ENCODE measurements at regions of chr2 and their contacts with region 1.

Region 1: DNA sequence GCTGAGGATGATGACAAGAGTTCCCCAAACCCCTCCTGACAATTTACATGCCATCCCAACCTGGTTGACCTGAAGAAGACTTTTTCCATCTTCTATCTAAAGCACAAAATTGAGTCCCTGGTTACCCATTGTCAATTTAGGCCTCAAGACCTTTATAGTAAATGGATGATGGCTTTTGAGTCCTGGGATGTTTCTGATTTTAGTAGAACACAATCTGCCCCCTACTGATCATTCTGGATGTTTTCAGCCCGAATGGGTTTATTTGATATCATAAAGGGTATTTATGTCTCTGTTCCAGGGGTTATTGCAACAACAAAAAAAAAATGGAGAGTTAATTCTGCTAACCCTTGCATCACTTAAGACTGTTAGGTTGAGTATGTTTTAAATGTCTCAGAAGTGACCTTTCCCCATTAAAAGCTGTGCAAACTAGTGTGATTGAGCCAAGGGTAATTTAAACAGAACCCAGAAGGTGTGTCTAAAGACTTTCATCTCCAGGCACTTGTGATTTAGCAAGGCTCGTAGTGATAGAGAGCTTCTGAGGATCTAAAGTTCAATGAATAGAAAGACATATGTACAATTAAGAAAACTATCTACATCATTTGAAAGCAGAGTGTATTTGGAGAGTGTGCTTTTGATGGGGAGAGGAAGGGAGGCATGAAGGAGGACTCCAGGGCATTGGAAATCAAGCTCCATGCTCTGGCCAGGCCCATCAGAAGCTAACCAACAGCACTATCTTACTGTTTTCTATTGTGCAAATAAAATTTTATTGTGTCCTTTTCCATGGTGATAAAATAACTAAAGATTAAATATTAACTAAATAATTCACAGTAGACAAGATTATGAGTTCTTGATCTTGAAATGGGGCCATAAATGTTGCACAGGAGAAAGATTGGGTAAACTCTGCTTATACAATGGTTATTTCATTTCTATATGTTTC is 96.6 kb upstream of the NOSTRIN start:
- DNase-seq: no peak
- H3K4me3 ChIP-seq: no peak overlapping the region
- H3K27ac ChIP-seq: no peak overlapping the region
- H3K27me3 ChIP-seq: no peaks in the 10 kb centered on the region
- CTCF ChIP-seq: peak; percentile 58

Region 2: GRCh38 chr2:168470320-168471162 is 235.3 kb before region 1 on chr2:
- CTCF ChIA-PET with region 1: no interaction called
- POLR2A ChIA-PET with region 1: no interaction called
- DNase-seq: no peak
- H3K4me3 ChIP-seq: no peak overlapping the region
- H3K27ac ChIP-seq: no peak overlapping the region
- H3K27me3 ChIP-seq: no peaks in the 10 kb centered on the region
- CTCF ChIP-seq: no peak

Region 3: DNA sequence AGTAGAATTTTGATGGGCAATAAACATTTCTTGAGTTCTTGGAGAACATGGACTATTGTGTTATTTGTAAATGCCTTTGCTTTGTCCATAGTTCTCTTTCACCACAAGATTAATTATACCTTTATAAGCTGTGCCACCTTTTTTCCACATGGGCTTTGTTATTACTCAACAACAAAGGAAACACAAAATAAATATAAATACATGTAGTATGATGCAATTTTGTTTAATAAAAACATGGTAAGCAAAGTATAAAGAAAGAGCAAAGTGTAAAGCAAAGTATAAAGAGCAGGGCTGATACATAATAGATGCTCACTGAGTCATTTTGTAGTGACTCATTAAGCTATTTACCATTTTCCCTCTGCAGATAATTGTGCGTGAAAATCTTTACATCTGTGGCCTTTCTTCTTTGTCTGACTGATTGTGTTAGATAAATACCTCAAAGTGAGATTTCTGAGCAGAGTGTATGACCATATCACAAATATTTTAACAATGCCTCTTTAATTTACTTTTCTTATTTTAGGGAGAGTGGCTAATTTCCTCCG is 168.8 kb before region 1 on chr2:
- CTCF ChIA-PET with region 1: no interaction called
- POLR2A ChIA-PET with region 1: no interaction called
- DNase-seq: no peak
- H3K4me3 ChIP-seq: no peak overlapping the region
- H3K27ac ChIP-seq: no peak overlapping the region
- H3K27me3 ChIP-seq: no peaks in the 10 kb centered on the region
- CTCF ChIP-seq: no peak

Region 4: GRCh38 chr2:168717790-168718502 is 12.1 kb after region 1 on chr2:
- CTCF ChIA-PET with region 1: interaction called, 14 read pairs
- POLR2A ChIA-PET with region 1: no interaction called
- DNase-seq: no peak
- H3K4me3 ChIP-seq: no peak overlapping the region
- H3K27ac ChIP-seq: no peak overlapping the region
- H3K27me3 ChIP-seq: no peaks in the 10 kb centered on the region
- CTCF ChIP-seq: no peak

Region 5: GRCh38 chr2:168801961-168802858 is 96.4 kb after region 1 on chr2 and contains the start of gene NOSTRIN:
- CTCF ChIA-PET with region 1: no interaction called
- POLR2A ChIA-PET with region 1: no interaction called
- DNase-seq: no peak
- H3K4me3 ChIP-seq: no peak within 1 kb of the TSS
- H3K27ac ChIP-seq: no peak within 1 kb of the TSS
- H3K27me3 ChIP-seq: no peaks in the 10 kb centered on the region
- CTCF ChIP-seq: no peak
- polyA plus RNA-seq, gene NOSTRIN: 0.10 TPM in 1 of 2 replicates, not detected in the other